AG04450 (cell line): ENCODE measurements at regions of chr6 and their contacts with region 1.

Region 1: DNA sequence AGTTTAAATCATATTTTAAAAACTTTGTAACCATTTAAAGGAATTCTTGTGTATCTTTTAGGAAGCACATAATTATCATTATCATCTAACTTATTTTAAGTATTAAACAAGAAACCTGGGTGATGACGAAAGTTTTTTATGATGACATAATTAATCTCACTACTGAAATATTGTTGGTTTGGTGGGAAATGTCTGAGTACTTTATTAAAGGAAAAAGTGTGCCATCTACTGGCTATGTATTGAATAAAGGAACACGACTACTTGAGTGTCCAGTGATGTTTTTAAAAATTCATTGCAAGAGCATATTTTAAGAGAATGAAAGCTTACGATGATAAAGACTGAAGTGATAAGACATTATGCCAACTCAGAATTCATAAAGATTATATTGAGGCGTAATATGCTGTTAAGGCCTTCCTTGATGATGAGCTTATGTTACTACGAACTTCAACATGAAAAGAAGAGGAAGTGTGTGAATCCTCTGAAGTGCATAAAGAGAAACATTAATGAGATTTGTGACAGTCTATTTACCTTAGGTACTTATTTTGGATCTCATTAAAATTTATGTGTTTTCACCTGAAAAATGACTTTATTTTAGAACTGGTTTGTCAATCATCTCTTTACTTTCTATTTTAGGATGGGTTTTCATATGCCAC is 12.0 kb upstream of the TRMT11 start:
- DNase-seq: no peak
- H3K4me3 ChIP-seq: no peak overlapping the region
- H3K27ac ChIP-seq: no peak overlapping the region
- H3K27me3 ChIP-seq: no peaks in the 10 kb centered on the region
- CTCF ChIP-seq: peak; percentile 55

Region 2: DNA sequence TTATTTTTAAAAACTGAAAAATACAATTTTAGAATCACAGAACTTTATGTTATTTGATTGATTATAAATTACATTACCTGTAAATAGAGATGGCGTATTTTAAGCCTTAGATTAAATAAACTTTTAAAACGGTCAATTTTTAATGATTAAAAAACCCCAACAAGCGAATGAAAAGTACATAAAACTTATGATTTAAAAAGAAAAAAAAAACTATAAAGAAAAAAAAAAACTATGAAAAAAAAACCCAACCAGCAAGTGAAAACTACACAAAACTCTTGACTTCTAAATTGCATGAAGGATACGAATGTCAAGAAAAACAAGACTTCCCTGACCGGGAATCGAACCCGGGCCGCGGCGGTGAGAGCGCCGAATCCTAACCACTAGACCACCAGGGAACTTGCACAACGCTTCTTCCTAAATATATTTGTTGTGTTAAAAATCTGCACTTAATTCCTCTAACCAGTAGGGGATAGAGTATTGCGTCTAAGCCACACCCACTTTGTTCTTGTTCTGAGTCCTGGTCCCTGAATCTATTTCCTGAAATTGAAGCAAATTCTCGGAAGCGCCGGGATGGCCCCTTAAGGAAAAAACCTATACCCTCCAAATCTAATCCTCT is 194.3 kb before region 1 on chr6:
- CTCF ChIA-PET with region 1: interaction called, 41 read pairs
- POLR2A ChIA-PET with region 1: no interaction called
- DNase-seq: peak; percentile 79
- H3K4me3 ChIP-seq: peak overlapping the region; percentile 68
- H3K27ac ChIP-seq: peak overlapping the region; percentile 88
- H3K27me3 ChIP-seq: no peaks in the 10 kb centered on the region
- CTCF ChIP-seq: peak; percentile 28; the same call in 1 of the 2 replicates

Region 3: DNA sequence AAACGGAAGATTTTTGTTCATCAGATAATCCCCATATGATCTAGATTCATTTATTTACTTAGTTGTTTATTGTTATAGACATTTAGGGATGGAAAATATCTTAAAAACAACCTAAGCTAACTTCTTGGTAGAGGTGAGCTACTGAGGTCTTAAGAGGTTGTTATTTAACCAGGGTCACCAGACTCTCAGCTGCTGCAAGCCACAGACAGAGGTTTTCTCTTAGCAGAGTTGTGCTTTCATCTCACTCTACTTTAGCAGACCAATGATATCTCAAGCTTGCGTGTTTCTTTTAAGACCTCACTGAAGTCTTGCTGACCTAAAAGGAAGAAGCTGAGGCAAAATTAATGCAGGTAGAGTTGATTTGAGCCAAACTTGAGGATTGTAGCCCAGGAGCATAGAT is 140.0 kb before region 1 on chr6:
- CTCF ChIA-PET with region 1: interaction called, 13 read pairs
- POLR2A ChIA-PET with region 1: no interaction called
- DNase-seq: no peak
- H3K4me3 ChIP-seq: no peak overlapping the region
- H3K27ac ChIP-seq: no peak overlapping the region
- H3K27me3 ChIP-seq: no peaks in the 10 kb centered on the region
- CTCF ChIP-seq: no peak

Region 4: DNA sequence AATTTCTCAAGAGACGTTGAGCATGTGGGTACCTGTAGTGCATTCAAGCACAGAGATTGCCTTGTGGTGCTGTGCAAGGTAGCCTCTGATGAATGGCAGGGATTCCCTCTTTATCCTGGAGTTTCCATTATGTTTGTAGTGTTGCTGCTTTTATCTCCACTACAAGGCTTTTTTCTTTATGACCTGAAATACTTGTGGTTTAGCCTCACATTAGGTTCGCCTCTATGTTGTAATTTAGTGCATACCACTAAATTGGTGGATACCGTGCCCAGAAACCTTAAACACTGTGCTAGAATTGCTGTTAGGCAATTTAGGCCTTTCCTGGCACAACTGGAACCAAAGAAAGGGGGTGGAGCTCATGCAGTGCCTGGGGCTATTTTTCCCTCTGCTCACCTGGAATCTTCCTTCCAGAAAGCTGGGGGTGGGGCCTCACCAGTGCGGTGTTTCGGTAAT is 106.8 kb before region 1 on chr6:
- CTCF ChIA-PET with region 1: interaction called, 10 read pairs
- POLR2A ChIA-PET with region 1: no interaction called
- DNase-seq: peak; percentile 33
- H3K4me3 ChIP-seq: no peak overlapping the region
- H3K27ac ChIP-seq: no peak overlapping the region
- H3K27me3 ChIP-seq: no peaks in the 10 kb centered on the region
- CTCF ChIP-seq: no peak

Region 5: GRCh38 chr6:125899726-125900182 is 74.6 kb before region 1 on chr6:
- CTCF ChIA-PET with region 1: interaction called, 12 read pairs
- POLR2A ChIA-PET with region 1: no interaction called
- DNase-seq: no peak
- H3K4me3 ChIP-seq: no peak overlapping the region
- H3K27ac ChIP-seq: no peak overlapping the region
- H3K27me3 ChIP-seq: no peaks in the 10 kb centered on the region
- CTCF ChIP-seq: no peak

Region 6: DNA sequence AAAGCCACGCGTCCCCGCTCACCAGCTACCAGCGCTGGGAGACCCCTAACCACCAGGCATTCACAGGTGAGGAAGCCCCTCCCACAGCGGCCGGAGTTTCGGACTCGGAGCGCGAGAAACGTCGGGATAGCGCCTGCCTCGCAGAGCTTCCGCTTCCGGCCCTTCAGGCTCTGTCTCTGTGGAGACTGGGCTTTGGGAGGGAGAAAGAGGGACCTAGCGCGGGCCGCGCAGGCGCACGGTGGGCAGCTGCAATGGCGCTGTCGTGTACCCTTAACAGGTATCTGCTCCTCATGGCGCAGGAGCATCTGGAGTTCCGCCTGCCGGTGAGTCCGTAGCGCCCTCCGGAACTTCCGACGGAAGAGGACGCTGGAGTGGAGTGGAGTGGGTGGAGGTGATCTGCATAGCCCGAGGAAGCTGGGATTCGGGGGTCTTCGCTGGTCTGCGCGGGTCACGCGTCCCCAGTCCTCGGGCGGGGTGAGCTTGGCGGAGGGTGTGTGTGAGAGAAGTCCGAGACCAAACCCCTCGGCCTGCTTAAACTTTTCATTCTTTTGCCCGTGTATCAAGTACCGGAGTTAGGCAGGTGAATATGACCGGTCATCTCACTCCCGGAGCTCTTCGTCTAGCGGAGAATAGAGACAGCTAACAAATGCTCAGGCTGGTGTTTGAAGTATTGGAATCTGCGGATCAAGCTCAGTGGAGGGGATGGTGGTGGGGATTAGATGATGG is 12.1 kb after region 1 on chr6 and contains the start of gene TRMT11:
- CTCF ChIA-PET with region 1: interaction called, 34 read pairs
- POLR2A ChIA-PET with region 1: no interaction called
- DNase-seq: no peak
- H3K4me3 ChIP-seq: peak within 1 kb of the TSS; percentile 97
- H3K27ac ChIP-seq: peak within 1 kb of the TSS; percentile 55
- H3K27me3 ChIP-seq: no peaks in the 10 kb centered on the region
- CTCF ChIP-seq: 0 out of 2 replicates have a peak, but pooled peaks have one; percentile 9
- polyA plus RNA-seq, gene TRMT11: 18.5 and 27.3 TPM in 2 replicates